ENCODE measurements at regions of chr13 and their contacts with region 1.

Region 1: GRCh38 chr13:20294497-20294896 is 62.4 kb upstream of the GJB6 start:
- DNase-seq: no peak
- ATAC-seq: no peak
- H3K4me3 ChIP-seq: no peak overlapping the region
- H3K27ac ChIP-seq: no peak overlapping the region
- H3K4me1 ChIP-seq: no peaks in the 10 kb centered on the region
- H3K27me3 ChIP-seq: no peaks in the 10 kb centered on the region
- CTCF ChIP-seq: no peak
- EP300 ChIP-seq: no peak
- POLR2A ChIP-seq: no peak
- RAD21 ChIP-seq: no peak

Region 2: GRCh38 chr13:20231839-20232555 is 62.5 kb before region 1 on chr13 and contains the start of gene GJB6:
- CTCF ChIA-PET with region 1: no interaction called
- POLR2A ChIA-PET with region 1: no interaction called
- RAD21 ChIA-PET with region 1: no interaction called
- SMC1A ChIA-PET with region 1: no interaction called
- in situ Hi-C with region 1: no loop called
- intact Hi-C with region 1: loop called (anchors 10 kb)
- DNase-seq: no peak
- ATAC-seq: no peak
- H3K4me3 ChIP-seq: no peak within 1 kb of the TSS
- H3K27ac ChIP-seq: no peak within 1 kb of the TSS
- H3K4me1 ChIP-seq: no peaks in the 10 kb centered on the region
- H3K27me3 ChIP-seq: peaks cover 6 to 12% of the 10 kb centered on the region in 2 experiments; a peak in 3 of 4 replicates
- CTCF ChIP-seq: no peak
- EP300 ChIP-seq: no peak
- POLR2A ChIP-seq: no peak
- RAD21 ChIP-seq: no peak
- polyA plus RNA-seq, gene GJB6: not detected

Region 3: DNA sequence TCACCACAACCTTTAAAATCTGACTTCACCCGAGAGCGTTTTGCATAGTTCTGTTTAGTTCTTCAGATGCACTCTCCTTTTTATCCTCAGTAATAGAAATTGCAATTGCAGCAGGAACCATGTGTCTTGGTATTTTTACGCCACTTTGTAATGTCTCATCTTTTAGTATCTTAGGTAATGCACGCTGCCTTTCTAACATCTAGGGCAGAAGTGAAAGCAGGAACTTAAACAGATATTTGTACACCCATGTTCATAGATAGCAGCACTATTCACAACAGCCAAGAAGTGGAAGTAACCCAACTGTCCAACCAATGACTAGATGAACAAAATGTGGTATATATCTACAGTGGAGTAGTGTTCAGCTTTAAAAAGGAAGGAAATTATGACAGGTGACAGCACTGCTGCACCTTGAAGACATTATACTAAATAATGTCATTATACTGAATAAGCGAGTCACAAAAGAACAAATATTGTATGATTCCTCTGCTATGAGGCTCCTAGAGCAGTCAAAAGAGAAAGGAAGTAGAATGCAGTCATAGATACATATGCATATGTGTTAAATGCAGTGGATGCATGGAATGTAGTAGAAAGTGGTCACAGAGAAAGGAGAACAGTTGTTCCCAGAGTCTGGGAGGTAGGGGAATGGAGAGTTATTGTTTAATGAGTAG is 43.5 kb after region 1 on chr13:
- CTCF ChIA-PET with region 1: no interaction called
- POLR2A ChIA-PET with region 1: no interaction called
- RAD21 ChIA-PET with region 1: no interaction called
- SMC1A ChIA-PET with region 1: no interaction called
- in situ Hi-C with region 1: no loop called
- intact Hi-C with region 1: no loop called
- DNase-seq: peak; percentile 13
- ATAC-seq: peak; percentile 36; the same call in 2 of the 3 replicates
- H3K4me3 ChIP-seq: no peak overlapping the region
- H3K27ac ChIP-seq: no peak overlapping the region
- H3K4me1 ChIP-seq: no peaks in the 10 kb centered on the region; the same call in 1 of the 2 replicates
- H3K27me3 ChIP-seq: no peaks in the 10 kb centered on the region
- CTCF ChIP-seq: no peak
- EP300 ChIP-seq: no peak
- POLR2A ChIP-seq: no peak
- RAD21 ChIP-seq: no peak

Region 4: GRCh38 chr13:20566898-20567874 is 272.7 kb after region 1 on chr13 and contains the start of gene IFT88:
- CTCF ChIA-PET with region 1: no interaction called
- POLR2A ChIA-PET with region 1: no interaction called
- RAD21 ChIA-PET with region 1: no interaction called
- SMC1A ChIA-PET with region 1: no interaction called
- in situ Hi-C with region 1: no loop called
- intact Hi-C with region 1: no loop called
- DNase-seq: peak; percentile 48
- ATAC-seq: peak; percentile 96
- H3K4me3 ChIP-seq: peak within 1 kb of the TSS; percentile 82
- H3K27ac ChIP-seq: peak within 1 kb of the TSS; percentile 72
- H3K4me1 ChIP-seq: no peaks in the 10 kb centered on the region; the same call in 1 of the 2 replicates
- H3K27me3 ChIP-seq: no peaks in the 10 kb centered on the region
- CTCF ChIP-seq: no peak
- EP300 ChIP-seq: no peak
- POLR2A ChIP-seq: peak; percentile 89
- RAD21 ChIP-seq: no peak
- polyA plus RNA-seq, gene IFT88: 3.3 to 3.8 TPM